Posterior vena cava (tissue), 2 donors: ENCODE measurements at regions of chr11 and their contacts with region 1.

Region 1: GRCh38 chr11:1628506-1629325 is 859 bp upstream of the KRTAP5-5 start:
- DNase-seq: peak; percentile 83

Region 2: GRCh38 chr11:1515082-1516060 is 113.3 kb before region 1 on chr11:
- intact Hi-C with region 1: no loop called
- DNase-seq: peak; percentile 95

Region 3: DNA sequence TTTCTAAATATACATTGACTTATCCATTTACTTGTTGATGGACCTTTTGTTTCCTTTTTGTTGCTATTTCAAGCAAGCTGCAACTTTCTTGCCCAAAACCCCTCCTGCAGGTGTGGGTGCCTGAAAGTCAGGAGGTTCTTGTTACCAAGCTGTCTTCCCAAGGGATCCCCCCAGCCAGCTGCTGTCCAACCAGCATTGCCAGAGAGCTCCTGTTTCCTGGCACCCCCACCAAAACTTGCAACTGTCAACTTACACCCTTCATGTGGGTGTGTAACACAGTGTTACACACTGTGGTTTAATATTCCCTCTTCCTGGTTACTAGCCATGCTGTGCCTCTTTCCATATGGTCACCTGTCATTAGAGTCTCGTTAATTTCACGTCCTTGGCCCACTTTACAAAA is 42.0 kb before region 1 on chr11:
- intact Hi-C with region 1: no loop called
- DNase-seq: peak; percentile 40

Region 4: DNA sequence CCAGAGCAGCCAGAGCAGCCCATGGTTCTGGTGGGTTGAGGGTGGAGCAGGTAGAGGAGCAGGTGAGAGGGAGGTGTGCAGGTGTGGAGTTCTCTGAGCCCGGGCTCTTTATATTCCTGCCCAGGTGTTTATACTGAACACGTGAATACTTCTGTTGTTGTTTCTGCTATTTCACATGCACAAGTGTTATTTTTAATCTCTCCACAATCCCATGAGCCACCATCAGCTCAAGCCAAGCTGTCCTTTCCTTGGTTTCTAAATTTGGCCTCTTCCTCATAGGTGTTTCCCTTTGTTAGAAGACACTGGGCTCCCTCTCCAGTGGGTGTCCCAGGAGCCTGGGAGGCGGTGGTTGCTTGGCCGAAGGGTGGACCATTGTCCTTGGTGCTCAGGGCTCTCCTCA is 20.4 kb before region 1 on chr11 and contains the start of gene KRTAP5-3:
- intact Hi-C with region 1: no loop called
- DNase-seq: peak; percentile 24
- total RNA-seq, gene KRTAP5-3: not detected

Region 5: GRCh38 chr11:1652771-1653540 is 24.2 kb after region 1 on chr11:
- intact Hi-C with region 1: no loop called
- DNase-seq: peak; percentile 94

Region 6: GRCh38 chr11:3359092-3359824 is 1730.5 kb after region 1 on chr11:
- intact Hi-C with region 1: loop called in 1 of 2 experiments (anchors 5 kb)
- DNase-seq: no peak